ENCODE measurements at regions of chr1 and their contacts with region 1.

Region 1: GRCh38 chr1:207868774-207869721 is 41.9 kb downstream of the CD34 start:
- DNase-seq: peak; percentile 66
- ATAC-seq: peak; percentile 73
- H3K4me3 Mint-ChIP-seq: peak overlapping the region; percentile 93
- H3K27ac Mint-ChIP-seq: peak overlapping the region; percentile 90
- H3K4me1 Mint-ChIP-seq: peaks cover 80% of the 10 kb centered on the region
- H3K27me3 Mint-ChIP-seq: no peaks in the 10 kb centered on the region

Region 2: GRCh38 chr1:207698822-207699483 is 170.1 kb before region 1 on chr1:
- CTCF ChIA-PET with region 1: no interaction called
- DNase-seq: peak; percentile 46
- ATAC-seq: no peak
- H3K4me3 Mint-ChIP-seq: no peak overlapping the region
- H3K27ac Mint-ChIP-seq: no peak overlapping the region
- H3K4me1 Mint-ChIP-seq: no peaks in the 10 kb centered on the region
- H3K27me3 Mint-ChIP-seq: peaks cover 20% of the 10 kb centered on the region

Region 3: DNA sequence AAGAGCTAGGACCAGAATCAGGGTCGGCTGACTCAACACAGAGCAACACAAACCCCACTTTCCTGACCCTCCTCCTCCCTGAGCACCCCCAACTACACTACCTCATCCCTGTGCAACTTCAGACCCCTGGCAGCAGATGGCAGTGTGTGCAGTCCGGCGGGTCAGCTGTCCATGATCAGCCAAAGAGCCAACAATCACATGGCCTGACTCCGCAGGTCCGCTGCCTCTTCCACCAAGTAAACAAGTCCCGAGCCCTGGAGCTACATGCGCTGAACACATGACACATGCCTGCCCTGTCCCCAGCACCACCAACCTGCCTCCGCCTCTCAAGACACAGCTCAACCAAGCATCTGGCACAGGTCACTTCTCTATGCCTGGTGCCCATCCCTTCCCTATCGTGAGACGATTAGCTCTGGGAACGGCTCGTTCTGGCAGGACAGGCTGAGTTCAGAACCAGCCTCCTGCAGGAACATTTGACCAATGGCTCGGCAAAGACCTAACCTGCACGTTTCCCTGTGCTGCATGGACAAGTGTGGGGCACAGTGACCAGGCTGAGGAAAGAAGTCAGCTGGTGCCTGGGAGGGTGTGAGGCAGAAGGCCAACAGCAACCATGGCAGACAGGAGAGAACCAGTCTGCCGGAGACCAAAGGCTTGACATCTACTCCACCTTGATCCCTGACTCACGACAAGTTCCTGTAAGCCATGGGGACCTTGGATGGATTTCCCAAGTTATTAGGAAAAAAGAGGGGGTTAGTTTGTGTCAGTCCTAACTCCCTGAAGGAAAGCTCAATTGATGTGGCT is 56.9 kb before region 1 on chr1:
- CTCF ChIA-PET with region 1: interaction called, 22 read pairs
- DNase-seq: peak; percentile 38
- ATAC-seq: peak; percentile 31
- H3K4me3 Mint-ChIP-seq: no peak overlapping the region
- H3K27ac Mint-ChIP-seq: no peak overlapping the region
- H3K4me1 Mint-ChIP-seq: peaks cover 42% of the 10 kb centered on the region
- H3K27me3 Mint-ChIP-seq: no peaks in the 10 kb centered on the region

Region 4: GRCh38 chr1:207818971-207819451 is 50.0 kb before region 1 on chr1:
- CTCF ChIA-PET with region 1: interaction called, 414 read pairs
- DNase-seq: no peak
- ATAC-seq: no peak
- H3K4me3 Mint-ChIP-seq: no peak overlapping the region
- H3K27ac Mint-ChIP-seq: no peak overlapping the region
- H3K4me1 Mint-ChIP-seq: peaks cover 52% of the 10 kb centered on the region
- H3K27me3 Mint-ChIP-seq: no peaks in the 10 kb centered on the region

Region 5: DNA sequence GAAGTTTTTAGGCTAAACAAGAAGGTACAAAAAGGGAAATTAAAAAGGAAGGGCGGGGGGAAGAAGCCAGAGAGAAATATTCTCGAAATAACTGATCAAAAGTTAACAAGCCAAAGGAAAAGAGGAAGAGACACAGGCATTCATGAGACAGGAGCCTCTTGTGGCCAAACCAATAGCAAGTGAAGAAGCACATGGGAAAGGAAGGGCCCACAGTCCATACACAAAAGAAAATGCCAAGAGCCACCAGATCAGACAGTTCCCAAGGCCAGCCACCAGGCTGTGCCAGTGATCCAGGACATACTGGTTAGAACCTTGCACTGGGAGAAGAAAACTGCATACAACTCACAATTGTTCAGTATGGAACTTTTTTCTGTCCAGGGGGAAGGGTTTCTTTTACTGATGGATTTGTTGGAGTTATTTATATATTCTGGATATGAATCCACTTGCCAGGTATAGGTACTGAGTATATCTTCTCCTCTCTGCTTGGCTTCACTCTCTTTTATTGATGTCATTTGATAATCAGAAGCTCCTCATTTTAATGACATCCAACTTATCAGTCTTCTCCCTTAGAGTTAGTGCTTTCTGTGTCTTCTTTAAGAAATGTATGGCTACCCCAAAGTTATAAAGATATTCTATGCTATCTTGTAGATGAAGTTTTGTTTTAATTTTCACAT is 40.4 kb before region 1 on chr1:
- CTCF ChIA-PET with region 1: interaction called, 414 read pairs
- DNase-seq: peak; percentile 74
- ATAC-seq: peak; percentile 20
- H3K4me3 Mint-ChIP-seq: no peak overlapping the region
- H3K27ac Mint-ChIP-seq: peak overlapping the region; percentile 65
- H3K4me1 Mint-ChIP-seq: peaks cover 95% of the 10 kb centered on the region
- H3K27me3 Mint-ChIP-seq: no peaks in the 10 kb centered on the region

Region 6: GRCh38 chr1:207838156-207839082 is 30.6 kb before region 1 on chr1:
- CTCF ChIA-PET with region 1: interaction called, 414 read pairs
- DNase-seq: peak; percentile 63
- ATAC-seq: peak; percentile 49
- H3K4me3 Mint-ChIP-seq: no peak overlapping the region
- H3K27ac Mint-ChIP-seq: peak overlapping the region; percentile 47
- H3K4me1 Mint-ChIP-seq: peaks cover 44% of the 10 kb centered on the region
- H3K27me3 Mint-ChIP-seq: no peaks in the 10 kb centered on the region

Measured in activated CD8-positive, alpha-beta memory T cell treated with anti-CD3 and anti-CD28 coated beads, Interleukin-2, amount 10 ng/mL, durations not matched to agents 7 days and 5 days (primary cell).